A673 (cell line): ENCODE measurements at regions of chr2 and their contacts with region 1.

Region 1: GRCh38 chr2:205166745-205167144 is 515.6 kb upstream of the NRP2 start:
- DNase-seq: no peak
- H3K4me3 ChIP-seq: no peak overlapping the region
- H3K27ac ChIP-seq: no peak overlapping the region
- H3K4me1 ChIP-seq: peaks cover 3% of the 10 kb centered on the region
- H3K27me3 ChIP-seq: no peaks in the 10 kb centered on the region
- CTCF ChIP-seq: no peak

Region 2: GRCh38 chr2:204984518-204984917 is 182.2 kb before region 1 on chr2:
- CTCF ChIA-PET with region 1: no interaction called
- POLR2A ChIA-PET with region 1: no interaction called
- intact Hi-C with region 1: no loop called
- DNase-seq: peak; percentile 33
- H3K4me3 ChIP-seq: no peak overlapping the region
- H3K27ac ChIP-seq: no peak overlapping the region
- H3K4me1 ChIP-seq: peaks cover 6% of the 10 kb centered on the region
- H3K27me3 ChIP-seq: no peaks in the 10 kb centered on the region
- CTCF ChIP-seq: no peak

Region 3: DNA sequence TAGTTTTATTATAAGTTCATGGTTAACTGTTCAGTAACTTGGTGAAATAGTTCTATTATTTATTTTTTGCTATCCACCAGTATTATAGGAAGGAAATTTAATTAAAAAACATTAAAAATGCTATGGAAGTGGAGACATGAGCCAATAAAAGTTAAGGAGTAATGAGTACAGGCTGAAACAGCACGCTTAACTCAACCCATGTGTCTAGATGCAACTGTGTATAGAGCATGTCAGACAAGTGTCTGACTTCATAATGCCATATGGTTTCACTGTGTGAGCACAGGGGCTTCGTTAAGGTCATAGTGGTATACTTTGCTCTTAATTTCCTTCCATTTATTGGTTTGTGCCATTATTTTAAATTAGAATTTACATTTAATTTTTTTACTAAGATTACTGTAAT is 51.2 kb before region 1 on chr2:
- CTCF ChIA-PET with region 1: no interaction called
- POLR2A ChIA-PET with region 1: no interaction called
- intact Hi-C with region 1: loop called (anchors 2 kb)
- DNase-seq: no peak
- H3K4me3 ChIP-seq: no peak overlapping the region
- H3K27ac ChIP-seq: no peak overlapping the region
- H3K4me1 ChIP-seq: no peaks in the 10 kb centered on the region
- H3K27me3 ChIP-seq: no peaks in the 10 kb centered on the region
- CTCF ChIP-seq: no peak

Region 4: DNA sequence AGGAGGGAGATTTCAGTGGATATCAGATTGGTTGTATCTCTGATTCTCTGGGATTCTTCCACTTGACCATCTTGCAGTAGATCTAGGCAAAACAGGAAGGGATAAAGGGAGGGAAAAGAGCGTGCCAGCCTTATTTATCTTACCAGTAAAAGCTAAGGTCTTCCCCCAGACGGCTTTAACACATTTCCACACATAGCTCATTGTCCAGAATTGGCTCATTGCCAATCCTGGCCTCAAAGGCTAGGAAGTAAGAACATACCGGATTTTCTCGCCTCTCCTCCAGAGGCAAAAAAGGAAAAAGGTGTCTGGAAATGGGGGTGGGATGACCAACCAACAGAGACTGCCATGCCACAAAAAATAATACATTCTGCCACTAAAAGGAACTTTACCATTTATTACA is 103.9 kb after region 1 on chr2:
- CTCF ChIA-PET with region 1: no interaction called
- POLR2A ChIA-PET with region 1: no interaction called
- intact Hi-C with region 1: no loop called
- DNase-seq: no peak
- H3K4me3 ChIP-seq: no peak overlapping the region
- H3K27ac ChIP-seq: no peak overlapping the region
- H3K4me1 ChIP-seq: no peaks in the 10 kb centered on the region
- H3K27me3 ChIP-seq: no peaks in the 10 kb centered on the region
- CTCF ChIP-seq: no peak

Region 5: GRCh38 chr2:205401511-205401910 is 234.8 kb after region 1 on chr2:
- CTCF ChIA-PET with region 1: no interaction called
- POLR2A ChIA-PET with region 1: no interaction called
- intact Hi-C with region 1: no loop called
- DNase-seq: no peak
- H3K4me3 ChIP-seq: no peak overlapping the region
- H3K27ac ChIP-seq: no peak overlapping the region
- H3K4me1 ChIP-seq: no peaks in the 10 kb centered on the region
- H3K27me3 ChIP-seq: no peaks in the 10 kb centered on the region
- CTCF ChIP-seq: no peak

Region 6: GRCh38 chr2:205754924-205755321 is 588.2 kb after region 1 on chr2:
- CTCF ChIA-PET with region 1: no interaction called
- POLR2A ChIA-PET with region 1: no interaction called
- intact Hi-C with region 1: no loop called
- DNase-seq: no peak
- H3K4me3 ChIP-seq: no peak overlapping the region
- H3K27ac ChIP-seq: no peak overlapping the region
- H3K4me1 ChIP-seq: no peaks in the 10 kb centered on the region
- H3K27me3 ChIP-seq: no peaks in the 10 kb centered on the region
- CTCF ChIP-seq: no peak